ENCODE measurements at regions of chr12 and their contacts with region 1.

Region 1: GRCh38 chr12:121334513-121335343 is 17.5 kb downstream of the ANAPC5 start:
- DNase-seq: no peak
- ATAC-seq: peak; percentile 77 to 91

Region 2: GRCh38 chr12:121417847-121418246 is 83.1 kb after region 1 on chr12:
- intact Hi-C with region 1: no loop called
- DNase-seq: no peak
- ATAC-seq: peak in 1 of 2 donors; percentile 43

Region 3: DNA sequence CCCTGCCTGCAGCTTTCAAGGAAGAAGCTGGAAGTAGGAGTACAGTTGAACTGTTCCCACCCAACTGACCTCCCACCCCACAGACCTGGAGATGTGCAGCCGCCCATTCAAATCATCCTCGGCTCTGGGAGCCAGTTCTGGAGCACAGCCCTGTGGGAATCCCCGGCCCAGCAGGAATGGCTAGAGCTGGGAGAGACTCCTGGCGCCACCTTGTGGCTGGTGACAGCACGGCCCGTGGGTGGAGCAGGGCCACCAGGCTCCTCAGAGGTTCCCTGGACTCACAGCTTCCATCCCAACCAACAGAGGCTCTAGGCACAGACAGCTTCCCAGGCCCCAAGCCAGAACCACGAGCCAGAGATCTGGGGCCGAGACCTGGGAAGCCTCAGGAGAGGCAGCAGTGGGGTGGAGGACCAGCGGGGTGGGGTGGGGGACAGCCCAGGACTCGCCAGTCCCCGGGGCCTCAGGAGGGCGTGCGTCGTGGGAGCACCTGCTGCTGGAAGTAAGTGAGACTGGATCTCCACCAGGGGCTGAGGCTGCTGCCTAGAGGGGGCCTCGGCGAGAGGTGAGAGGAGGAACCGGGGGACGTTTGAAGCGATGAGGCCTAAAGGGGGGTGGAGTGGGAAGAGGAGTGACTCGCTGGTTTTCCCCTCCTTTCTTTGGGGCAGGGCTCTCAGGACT is 108.6 kb after region 1 on chr12:
- intact Hi-C with region 1: loop called (anchors 1 to 5 kb)
- DNase-seq: peak; percentile 88
- ATAC-seq: peak; percentile 88 to 93

Measured in left cardiac atrium (tissue), 4 donors.